Pancreas (tissue), 10 donors: ENCODE measurements at regions of chr19 and their contacts with region 1.

Region 1: DNA sequence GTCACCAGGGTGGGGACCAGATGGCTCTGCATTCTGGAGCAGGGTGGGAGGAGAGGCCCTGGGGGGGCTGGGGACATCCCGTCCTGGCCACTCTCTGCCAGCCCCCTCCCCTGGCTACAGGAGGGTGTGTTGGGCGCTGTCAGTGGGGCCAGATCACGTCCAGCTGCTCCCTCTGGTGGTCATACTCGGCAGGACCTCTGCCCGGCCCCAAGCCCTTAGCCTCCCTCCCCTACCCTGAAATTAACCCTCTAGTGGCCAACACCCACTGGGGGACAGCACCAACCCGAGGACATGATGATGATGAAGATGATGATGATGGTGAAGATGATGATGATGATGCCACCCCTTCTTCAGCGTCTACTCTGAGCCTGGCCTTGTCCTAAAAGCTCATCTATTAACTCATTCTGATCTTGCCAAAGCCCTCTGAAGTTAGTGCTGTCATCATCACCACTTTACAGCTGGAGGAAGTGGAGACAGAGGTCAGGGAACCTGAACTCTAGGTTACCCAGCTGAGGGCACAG is 590 bp upstream of the LGI4 start:
- DNase-seq: peak; percentile 67 to 90 (median 80)
- ATAC-seq: peak; percentile 71 to 85 (median 80)
- H3K4me3 ChIP-seq: no peak overlapping the region
- H3K27ac ChIP-seq: no peak overlapping the region
- H3K4me1 ChIP-seq: peaks cover 3 to 10% (median 5%) of the 10 kb centered on the region in 3 donors
- H3K27me3 ChIP-seq: no peaks in the 10 kb centered on the region
- CTCF ChIP-seq: peak; percentile 78 to 88 (median 86)

Region 2: GRCh38 chr19:34712395-34713261 is 422.8 kb before region 1 on chr19:
- intact Hi-C with region 1: no loop called
- DNase-seq: peak in 3 of 6 donors; percentile 48 to 72 (median 50)
- ATAC-seq: peak; percentile 77 to 91 (median 90)
- H3K4me3 ChIP-seq: no peak overlapping the region
- H3K27ac ChIP-seq: no peak overlapping the region
- H3K4me1 ChIP-seq: peaks cover 0 to 3% (median 0%) of the 10 kb centered on the region in 3 donors
- H3K27me3 ChIP-seq: no peaks in the 10 kb centered on the region
- CTCF ChIP-seq: peak; percentile 61 to 86 (median 77)

Region 3: DNA sequence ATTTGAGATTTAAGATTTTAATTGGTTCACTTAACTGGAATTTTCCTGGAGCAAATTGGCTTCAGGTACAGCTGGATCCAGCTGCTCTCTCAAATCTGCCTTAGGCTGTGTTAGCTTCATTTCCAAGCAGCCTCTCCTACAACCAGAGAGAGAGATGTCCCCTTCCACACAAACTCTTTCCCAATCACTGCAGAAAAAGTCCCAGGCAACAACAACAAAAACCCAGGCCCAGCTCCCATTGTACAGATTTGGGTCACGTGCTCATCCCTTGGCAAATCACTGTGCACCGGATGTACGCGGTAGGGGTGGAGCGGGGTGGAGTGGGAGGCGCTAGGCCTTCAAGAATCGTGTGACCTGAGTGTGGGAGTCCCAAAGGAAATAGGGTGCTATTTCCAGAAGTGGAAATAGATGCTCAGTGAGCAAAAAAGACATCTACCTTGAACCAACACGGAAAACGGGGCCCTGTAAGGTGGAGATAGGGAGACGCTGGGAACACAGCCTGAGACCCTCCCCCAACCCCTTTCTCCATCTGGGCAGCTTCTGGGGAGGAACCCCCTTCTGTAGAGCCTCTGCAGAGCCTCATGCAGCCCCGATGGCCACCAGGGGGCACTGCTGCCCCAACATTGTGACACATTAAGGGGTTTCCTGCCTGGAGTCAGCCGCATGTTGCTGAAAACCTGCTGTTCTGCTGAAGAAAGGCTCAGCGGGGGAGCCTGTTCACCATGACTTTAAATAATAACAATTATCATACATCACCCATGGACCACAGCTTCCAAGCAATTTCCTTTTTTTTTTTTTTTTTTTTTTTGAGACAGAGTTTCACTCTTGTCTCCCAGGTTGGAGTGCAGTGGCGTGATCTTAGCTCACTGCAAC is 68.5 kb before region 1 on chr19:
- intact Hi-C with region 1: loop called in 2 of 3 experiments (anchors 5 to 10 kb)
- DNase-seq: peak; percentile 74 to 98 (median 90)
- ATAC-seq: peak; percentile 59 to 89 (median 84)
- H3K4me3 ChIP-seq: no peak overlapping the region
- H3K27ac ChIP-seq: no peak overlapping the region
- H3K4me1 ChIP-seq: peaks cover 0 to 3% (median 0%) of the 10 kb centered on the region in 3 donors
- H3K27me3 ChIP-seq: no peaks in the 10 kb centered on the region
- CTCF ChIP-seq: peak; percentile 69 to 89 (median 87)

Region 4: GRCh38 chr19:35557539-35558399 is 422.3 kb after region 1 on chr19:
- intact Hi-C with region 1: no loop called
- DNase-seq: peak; percentile 72 to 96 (median 86)
- ATAC-seq: peak; percentile 49 to 89 (median 80)
- H3K4me3 ChIP-seq: peak overlapping the region in 3 of 4 donors; percentile 28 to 47 (median 31)
- H3K27ac ChIP-seq: no peak overlapping the region
- H3K4me1 ChIP-seq: peaks cover 0 to 6% (median 0%) of the 10 kb centered on the region in 3 donors
- H3K27me3 ChIP-seq: no peaks in the 10 kb centered on the region
- CTCF ChIP-seq: no peak